ENCODE measurements at regions of chr18 and their contacts with region 1.

Region 1: DNA sequence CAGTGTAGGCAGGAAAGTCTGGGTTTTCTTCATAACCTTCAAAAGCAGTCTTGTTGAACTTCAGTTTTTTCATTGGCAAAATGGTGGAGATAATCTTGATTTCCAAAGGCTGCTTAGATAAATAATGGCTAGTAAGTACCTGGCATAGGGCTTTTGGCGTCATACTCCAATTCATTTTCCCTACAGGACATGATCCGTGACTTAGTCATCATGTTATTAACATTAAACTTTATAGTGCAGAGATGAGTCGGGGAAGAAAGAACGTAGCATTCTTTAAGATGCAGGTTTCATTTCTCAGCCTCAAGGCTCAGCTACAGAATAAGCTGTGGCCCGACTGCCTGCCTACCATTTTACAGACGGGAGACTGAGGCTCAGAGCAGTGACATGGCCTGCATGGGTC is 64.0 kb downstream of the RALBP1 start:
- DNase-seq: no peak
- H3K4me3 ChIP-seq: no peak overlapping the region
- H3K27ac ChIP-seq: no peak overlapping the region
- H3K4me1 ChIP-seq: no peaks in the 10 kb centered on the region
- H3K27me3 ChIP-seq: no peaks in the 10 kb centered on the region
- CTCF ChIP-seq: no peak

Region 2: DNA sequence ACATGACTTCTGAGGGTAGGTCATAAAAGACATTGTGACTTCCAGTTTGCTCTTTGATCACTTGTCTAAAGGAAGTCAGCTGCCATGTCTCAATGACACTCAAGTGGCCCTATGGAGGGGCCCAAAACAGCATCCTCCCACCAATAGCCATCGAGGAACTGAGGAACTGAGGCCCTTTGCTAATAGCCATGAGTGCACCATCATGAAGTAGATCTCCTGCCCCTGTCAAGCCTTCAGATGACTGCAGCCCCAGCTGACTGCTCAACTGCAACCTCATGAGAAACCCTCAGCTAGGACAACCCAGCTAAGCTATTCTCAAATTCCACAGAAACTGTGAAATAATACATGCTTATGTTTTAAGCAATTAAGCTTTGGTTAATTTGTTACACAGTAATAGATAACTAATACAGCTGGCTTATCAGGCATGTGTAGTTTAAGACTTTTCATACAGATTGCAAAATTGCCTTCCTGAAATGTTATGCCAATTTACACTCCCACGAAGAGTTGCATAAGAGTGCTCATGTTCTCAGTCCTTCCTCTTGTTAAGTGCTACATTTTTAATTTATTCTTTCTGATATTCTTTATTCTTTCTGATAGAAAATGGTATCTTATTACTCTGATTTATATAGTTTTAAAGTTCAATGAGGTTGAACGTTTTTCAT is 542.4 kb before region 1 on chr18:
- CTCF ChIA-PET with region 1: no interaction called
- POLR2A ChIA-PET with region 1: interaction called, 33 read pairs
- intact Hi-C with region 1: no loop called
- DNase-seq: no peak
- H3K4me3 ChIP-seq: no peak overlapping the region
- H3K27ac ChIP-seq: no peak overlapping the region
- H3K4me1 ChIP-seq: peaks cover 27% of the 10 kb centered on the region
- H3K27me3 ChIP-seq: no peaks in the 10 kb centered on the region
- CTCF ChIP-seq: no peak

Region 3: GRCh38 chr18:9466846-9467245 is 72.4 kb before region 1 on chr18:
- CTCF ChIA-PET with region 1: no interaction called
- POLR2A ChIA-PET with region 1: interaction called, 10 read pairs
- intact Hi-C with region 1: no loop called
- DNase-seq: no peak
- H3K4me3 ChIP-seq: no peak overlapping the region
- H3K27ac ChIP-seq: no peak overlapping the region
- H3K4me1 ChIP-seq: no peaks in the 10 kb centered on the region
- H3K27me3 ChIP-seq: no peaks in the 10 kb centered on the region
- CTCF ChIP-seq: no peak

Measured in PC-9 (cell line).